ENCODE measurements at regions of chr15 and their contacts with region 1.

Region 1: GRCh38 chr15:85609492-85609891 is 185.2 kb downstream of the KLHL25 start:
- DNase-seq: no peak
- H3K4me3 ChIP-seq: no peak overlapping the region
- H3K27ac ChIP-seq: no peak overlapping the region
- H3K4me1 ChIP-seq: peaks cover 0 to 38% (median 30%) of the 10 kb centered on the region in 4 donors
- H3K27me3 ChIP-seq: no peaks in the 10 kb centered on the region
- CTCF ChIP-seq: no peak
- EP300 ChIP-seq: no peak
- POLR2A ChIP-seq: no peak

Region 2: GRCh38 chr15:85564686-85565085 is 44.8 kb before region 1 on chr15:
- intact Hi-C with region 1: loop called (anchors 1 kb)
- DNase-seq: no peak
- H3K4me3 ChIP-seq: no peak overlapping the region
- H3K27ac ChIP-seq: no peak overlapping the region
- H3K4me1 ChIP-seq: peaks cover 0 to 11% (median 0%) of the 10 kb centered on the region in 4 donors
- H3K27me3 ChIP-seq: no peaks in the 10 kb centered on the region
- CTCF ChIP-seq: no peak
- EP300 ChIP-seq: no peak
- POLR2A ChIP-seq: no peak

Region 3: DNA sequence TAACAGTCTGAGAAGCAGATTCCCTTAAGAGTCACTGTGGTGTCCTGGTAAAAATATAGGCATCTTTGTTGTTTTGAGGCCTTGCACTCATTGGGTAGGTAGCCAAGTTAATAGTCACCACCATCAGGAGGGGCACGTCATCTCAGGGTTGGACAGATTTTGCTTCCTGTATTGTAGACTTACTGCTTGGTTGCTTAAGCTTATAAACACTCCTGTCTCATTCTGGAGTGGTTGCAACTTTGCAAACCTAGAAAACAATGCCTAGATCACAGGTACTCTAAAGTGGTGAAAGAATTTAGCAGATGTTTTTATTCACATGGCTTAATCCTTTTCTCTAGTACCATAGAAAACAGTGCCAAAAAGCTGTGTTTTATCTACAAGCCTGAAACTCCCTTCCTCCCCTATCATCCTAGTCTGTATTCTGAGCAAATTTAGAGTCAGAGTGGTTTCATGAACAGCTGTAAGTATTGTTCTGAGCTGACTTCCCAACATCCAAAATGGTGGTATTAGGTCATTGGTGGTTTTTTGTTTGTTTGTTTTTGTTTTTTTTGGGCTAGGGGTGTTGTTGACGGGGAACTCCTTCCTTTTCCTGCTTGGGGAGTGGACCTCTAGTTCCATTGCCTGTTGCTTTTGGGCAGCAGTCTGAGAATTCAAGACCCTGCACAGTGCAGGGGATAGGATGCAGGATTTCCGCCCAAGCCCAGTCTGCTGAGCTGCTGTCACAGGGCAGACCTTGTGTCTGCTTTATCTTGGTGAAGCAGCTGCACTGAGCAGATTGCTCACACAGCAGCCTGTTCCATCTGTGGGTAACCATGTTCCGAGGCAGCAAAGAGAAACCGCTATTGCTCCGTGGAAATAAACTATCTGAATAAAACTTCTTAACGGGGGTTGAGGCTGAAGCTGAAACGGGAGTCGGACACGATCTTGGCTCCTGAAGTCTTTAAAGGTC is 27.1 kb before region 1 on chr15:
- intact Hi-C with region 1: no loop called
- DNase-seq: peak; percentile 77
- H3K4me3 ChIP-seq: peak overlapping the region; percentile 13 to 41 (median 30)
- H3K27ac ChIP-seq: peak overlapping the region; percentile 72 to 84 (median 74)
- H3K4me1 ChIP-seq: peaks cover 0 to 62% (median 33%) of the 10 kb centered on the region in 4 donors
- H3K27me3 ChIP-seq: no peaks in the 10 kb centered on the region
- CTCF ChIP-seq: no peak
- EP300 ChIP-seq: no peak
- POLR2A ChIP-seq: no peak